AG04449 (cell line): ENCODE measurements at regions of chr22 and their contacts with region 1.

Region 1: DNA sequence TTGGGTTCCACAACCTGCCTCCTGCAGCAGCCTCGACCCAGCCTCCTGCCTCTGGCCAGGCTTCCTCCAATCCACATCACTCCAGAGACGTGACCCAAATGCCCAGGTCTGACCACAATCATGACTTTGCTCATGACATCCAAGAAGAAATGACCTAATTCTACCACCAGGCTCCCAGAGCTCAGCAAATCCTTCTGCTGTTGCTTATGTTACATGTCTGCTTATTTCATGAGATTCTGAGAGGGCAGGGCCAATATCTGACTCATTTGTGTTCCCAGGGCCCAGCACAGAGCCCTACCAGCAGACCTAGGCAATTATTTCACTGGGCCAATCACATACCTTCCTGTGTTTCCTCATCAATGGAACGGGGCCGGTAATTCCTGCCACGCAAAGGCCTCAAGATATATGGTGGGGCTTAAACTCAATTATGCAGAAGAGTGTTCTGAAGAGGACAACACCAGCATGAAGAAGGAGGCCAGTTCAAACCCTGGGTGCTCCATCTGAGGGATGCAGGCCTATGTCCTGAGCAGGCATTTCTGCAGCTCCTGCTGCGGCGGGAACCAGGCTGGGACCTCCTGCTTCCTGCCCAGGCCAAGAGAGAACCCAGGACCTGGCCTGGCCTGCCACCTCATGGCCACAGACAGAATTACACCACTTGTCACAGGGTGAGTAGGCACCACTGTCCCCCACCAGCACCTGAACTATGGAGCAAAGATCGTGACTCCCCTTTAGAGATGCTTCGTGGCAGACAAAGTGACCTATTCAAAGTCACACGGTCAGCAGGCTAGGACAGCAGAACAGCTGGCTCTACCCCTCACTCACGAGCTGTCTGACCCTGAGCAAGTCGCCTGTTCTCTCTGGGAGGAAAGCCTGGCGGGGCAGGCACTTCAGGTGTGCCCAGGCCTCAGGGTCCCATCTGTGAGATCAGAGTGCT is 5.9 kb downstream of the CENPM start:
- DNase-seq: peak; percentile 52
- H3K4me3 ChIP-seq: no peak overlapping the region
- CTCF ChIP-seq: peak; percentile 93

Region 2: DNA sequence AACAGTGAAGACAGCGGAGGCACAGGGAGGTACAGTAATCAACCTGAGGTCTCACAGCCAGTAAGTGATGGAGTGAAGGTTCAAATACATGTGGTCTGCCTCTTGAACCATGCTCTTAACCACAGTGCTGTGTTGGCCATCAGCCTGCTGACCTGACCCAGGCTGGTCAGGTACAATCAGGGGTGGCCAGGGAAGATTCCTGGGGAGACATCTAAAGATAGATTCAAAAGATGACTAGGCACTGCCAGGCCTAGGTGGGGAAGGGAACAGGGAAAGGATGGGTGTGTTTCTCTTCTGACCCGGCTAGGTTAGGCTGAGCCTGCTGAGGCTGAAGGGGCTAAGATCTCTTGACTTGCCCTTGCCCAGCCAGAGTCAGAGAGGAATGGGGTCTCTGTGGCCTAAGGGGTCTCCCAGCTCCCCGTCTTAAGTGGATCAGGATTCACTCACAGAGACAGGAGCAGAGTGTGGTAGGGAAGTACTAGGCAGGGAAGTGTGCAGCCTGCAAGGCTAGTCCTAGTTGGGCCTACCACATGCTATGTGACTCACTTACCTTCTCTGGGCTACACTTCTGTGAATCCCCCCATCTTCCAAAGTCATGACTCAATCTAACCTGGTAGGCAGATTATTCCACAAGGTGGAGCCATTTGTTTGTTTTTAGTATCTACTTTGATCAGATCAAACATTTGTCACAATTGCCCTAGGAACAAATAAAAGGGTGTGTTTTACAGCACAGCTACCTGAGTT is 118.6 kb before region 1 on chr22:
- CTCF ChIA-PET with region 1: interaction called, 13 read pairs
- POLR2A ChIA-PET with region 1: no interaction called
- DNase-seq: no peak
- H3K4me3 ChIP-seq: no peak overlapping the region
- CTCF ChIP-seq: peak; percentile 3

Region 3: DNA sequence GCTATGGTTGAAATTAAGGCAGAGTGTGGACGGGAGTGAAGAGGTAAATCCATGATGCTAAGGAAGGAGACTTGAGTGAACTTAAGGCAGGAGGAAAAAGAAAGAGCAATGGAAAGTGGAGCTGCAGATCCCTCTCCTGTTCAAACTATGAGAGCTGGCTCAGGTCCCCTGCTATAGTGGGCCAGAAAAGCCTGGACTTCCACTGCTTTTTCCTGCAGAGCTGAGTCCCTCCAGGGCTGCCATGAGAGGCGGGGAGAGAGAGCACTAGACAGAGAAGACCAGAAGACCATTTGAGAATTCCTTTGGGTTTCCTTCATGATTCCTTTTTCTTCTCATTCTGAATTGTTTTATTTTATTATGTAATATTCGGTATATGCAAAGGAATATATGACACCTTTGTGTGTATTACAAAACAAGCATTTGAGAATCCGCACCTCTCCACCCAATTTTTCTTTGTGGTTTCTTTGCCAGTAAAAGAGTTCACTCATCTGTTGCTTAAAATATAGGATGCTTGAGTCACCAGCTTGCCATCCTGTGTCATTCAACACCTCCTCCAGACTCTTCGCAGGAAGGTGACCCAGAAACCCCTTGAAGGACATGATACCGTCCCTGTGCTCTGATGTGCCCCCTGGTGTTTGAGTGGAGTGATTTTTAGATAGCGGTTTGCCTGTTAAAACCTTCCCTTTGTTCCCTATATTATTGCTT is 83.8 kb before region 1 on chr22:
- CTCF ChIA-PET with region 1: interaction called, 11 read pairs
- POLR2A ChIA-PET with region 1: no interaction called
- DNase-seq: no peak
- H3K4me3 ChIP-seq: no peak overlapping the region
- CTCF ChIP-seq: peak; percentile 51

Region 4: GRCh38 chr22:41925655-41926460 is 15.2 kb before region 1 on chr22:
- CTCF ChIA-PET with region 1: interaction called, 51 read pairs
- POLR2A ChIA-PET with region 1: no interaction called
- DNase-seq: no peak
- H3K4me3 ChIP-seq: peak overlapping the region; percentile 41
- CTCF ChIP-seq: peak; percentile 79

Region 5: GRCh38 chr22:42101199-42101598 is 160.1 kb after region 1 on chr22:
- CTCF ChIA-PET with region 1: no interaction called
- POLR2A ChIA-PET with region 1: no interaction called
- DNase-seq: no peak
- H3K4me3 ChIP-seq: no peak overlapping the region
- CTCF ChIP-seq: no peak